Right ventricle myocardium inferior (tissue), 1 donor: ENCODE measurements at regions of chr14 and their contacts with region 1.

Region 1: GRCh38 chr14:63493246-63493645 is 49.9 kb downstream of the PPP2R5E start:
- DNase-seq: no peak
- ATAC-seq: peak; percentile 34

Region 2: DNA sequence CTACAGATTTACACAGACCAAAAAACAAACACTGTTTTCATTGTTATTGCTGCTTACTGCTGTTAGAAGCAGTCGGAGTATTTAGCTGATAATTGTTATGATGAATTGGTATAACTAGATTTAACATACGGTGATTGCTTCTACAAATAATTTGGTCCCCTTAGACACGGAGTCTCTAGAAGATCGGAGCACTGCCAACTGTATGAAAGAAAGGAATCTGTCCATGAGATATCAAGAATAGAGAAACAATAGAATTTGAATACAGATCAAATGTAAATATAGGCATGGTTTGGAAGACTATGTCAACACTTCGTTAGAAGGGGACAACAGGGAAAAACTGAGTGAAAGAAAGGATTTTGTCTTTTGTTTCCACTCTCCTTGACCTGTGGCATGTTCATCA is 61.0 kb before region 1 on chr14:
- intact Hi-C with region 1: loop called (anchors 5 kb)
- DNase-seq: no peak
- ATAC-seq: no peak